Activated CD4-positive, alpha-beta T cell treated with anti-CD3 and anti-CD28 coated beads for 36 hours (primary cell): ENCODE measurements at regions of chr3 and their contacts with region 1.

Region 1: DNA sequence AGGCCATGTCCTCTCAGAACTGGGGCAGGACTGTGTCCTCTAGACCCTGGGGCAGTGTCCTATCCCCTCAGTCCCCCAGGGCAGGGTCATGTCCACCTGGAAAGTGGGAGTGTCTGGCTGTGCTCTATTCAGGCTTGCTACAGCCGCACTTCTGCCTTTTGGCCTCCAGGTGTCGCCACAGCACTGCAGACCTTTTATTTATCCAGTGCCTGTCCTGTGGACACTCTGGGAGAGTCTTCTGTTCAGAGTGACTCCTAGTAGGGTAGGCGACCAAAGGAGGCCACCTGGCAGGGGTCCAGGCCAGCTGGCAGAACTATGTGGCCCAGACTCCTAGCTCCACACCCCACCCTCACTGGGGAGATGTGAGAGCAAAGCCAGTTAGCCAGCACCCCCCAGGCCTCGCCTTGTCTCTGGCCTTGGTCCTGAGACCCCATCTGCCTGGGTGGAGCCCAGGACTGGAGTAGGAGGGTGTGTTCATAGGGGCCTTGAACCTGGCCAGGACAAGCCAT is 3.9 kb downstream of the TMIE start:
- DNase-seq: peak; percentile 80
- ATAC-seq: peak; percentile 81
- H3K4me3 Mint-ChIP-seq: no peak overlapping the region
- H3K27ac Mint-ChIP-seq: no peak overlapping the region
- H3K4me1 Mint-ChIP-seq: peaks cover 8% of the 10 kb centered on the region
- H3K27me3 Mint-ChIP-seq: peaks cover 1% of the 10 kb centered on the region

Region 2: GRCh38 chr3:46143951-46144473 is 561.1 kb before region 1 on chr3:
- CTCF ChIA-PET with region 1: no interaction called
- POLR2A ChIA-PET with region 1: no interaction called
- intact Hi-C with region 1: no loop called
- DNase-seq: no peak
- ATAC-seq: no peak
- H3K4me3 Mint-ChIP-seq: no peak overlapping the region
- H3K27ac Mint-ChIP-seq: no peak overlapping the region
- H3K4me1 Mint-ChIP-seq: peaks cover 5% of the 10 kb centered on the region
- H3K27me3 Mint-ChIP-seq: no peaks in the 10 kb centered on the region

Region 3: DNA sequence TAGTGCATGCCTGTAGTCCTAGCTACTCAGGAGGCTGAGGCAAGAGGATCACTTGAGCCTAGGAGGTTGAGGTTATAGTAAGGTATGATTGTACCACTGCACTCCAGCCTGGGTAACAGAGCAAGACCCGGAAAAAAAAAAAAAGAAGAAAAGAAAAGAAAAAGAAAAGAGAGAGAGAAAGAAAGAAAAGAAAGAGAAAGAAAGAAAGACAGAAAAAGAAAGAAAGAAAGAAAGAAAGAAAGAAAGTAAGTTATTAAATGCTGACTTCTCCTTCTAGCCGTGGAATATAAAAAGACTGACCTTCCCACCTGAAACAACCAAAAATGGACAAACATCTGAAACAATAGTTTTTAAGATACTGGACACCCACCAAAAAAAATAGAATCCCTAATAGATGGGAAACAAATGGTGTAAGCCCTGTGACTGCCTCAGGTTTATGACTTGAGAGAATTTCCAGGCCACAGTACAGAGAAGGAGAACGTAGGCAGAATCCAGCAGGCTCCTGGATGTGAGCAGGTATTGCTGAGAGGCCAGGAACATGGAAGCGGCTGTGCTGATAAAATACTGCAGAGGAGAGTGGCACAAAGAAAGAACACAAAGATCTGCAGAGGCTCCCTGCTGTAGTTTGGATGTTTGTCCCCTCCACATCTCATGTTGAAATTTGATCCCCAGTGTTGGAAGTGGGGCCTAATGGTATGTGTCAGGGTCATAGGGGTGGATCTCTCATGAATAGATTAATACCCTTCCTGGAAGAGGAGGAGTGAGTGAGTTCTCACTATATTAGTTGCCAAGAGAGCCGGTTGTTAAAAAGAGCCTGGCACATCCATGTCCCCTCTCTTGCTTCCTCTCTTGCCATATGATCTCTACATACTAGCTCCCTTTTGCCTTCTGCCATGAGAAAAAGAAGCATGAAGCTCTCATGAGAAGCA is 54.4 kb after region 1 on chr3:
- CTCF ChIA-PET with region 1: no interaction called
- POLR2A ChIA-PET with region 1: no interaction called
- intact Hi-C with region 1: no loop called
- DNase-seq: no peak
- ATAC-seq: no peak
- H3K4me3 Mint-ChIP-seq: no peak overlapping the region
- H3K27ac Mint-ChIP-seq: no peak overlapping the region
- H3K4me1 Mint-ChIP-seq: no peaks in the 10 kb centered on the region
- H3K27me3 Mint-ChIP-seq: no peaks in the 10 kb centered on the region

Region 4: GRCh38 chr3:46895204-46895660 is 190.2 kb after region 1 on chr3:
- CTCF ChIA-PET with region 1: interaction called, 12 read pairs
- POLR2A ChIA-PET with region 1: no interaction called
- intact Hi-C with region 1: loop called (anchors 1 kb)
- DNase-seq: peak; percentile 86
- ATAC-seq: peak; percentile 74
- H3K4me3 Mint-ChIP-seq: no peak overlapping the region
- H3K27ac Mint-ChIP-seq: no peak overlapping the region
- H3K4me1 Mint-ChIP-seq: peaks cover 4% of the 10 kb centered on the region
- H3K27me3 Mint-ChIP-seq: peaks cover 35% of the 10 kb centered on the region

Region 5: GRCh38 chr3:46909535-46910442 is 204.7 kb after region 1 on chr3:
- CTCF ChIA-PET with region 1: interaction called, 13 read pairs
- POLR2A ChIA-PET with region 1: no interaction called
- intact Hi-C with region 1: loop called in 1 of 2 experiments (anchors 1 kb)
- DNase-seq: peak; percentile 91
- ATAC-seq: peak; percentile 96
- H3K4me3 Mint-ChIP-seq: no peak overlapping the region
- H3K27ac Mint-ChIP-seq: no peak overlapping the region
- H3K4me1 Mint-ChIP-seq: peaks cover 18% of the 10 kb centered on the region
- H3K27me3 Mint-ChIP-seq: no peaks in the 10 kb centered on the region

Region 6: GRCh38 chr3:47273564-47273963 is 568.5 kb after region 1 on chr3:
- CTCF ChIA-PET with region 1: no interaction called
- POLR2A ChIA-PET with region 1: no interaction called
- intact Hi-C with region 1: no loop called
- DNase-seq: no peak
- ATAC-seq: no peak
- H3K4me3 Mint-ChIP-seq: no peak overlapping the region
- H3K27ac Mint-ChIP-seq: no peak overlapping the region
- H3K4me1 Mint-ChIP-seq: no peaks in the 10 kb centered on the region
- H3K27me3 Mint-ChIP-seq: no peaks in the 10 kb centered on the region